Common myeloid progenitor, CD34-positive (primary cell): ENCODE measurements at regions of chr14 and their contacts with region 1.

Region 1: DNA sequence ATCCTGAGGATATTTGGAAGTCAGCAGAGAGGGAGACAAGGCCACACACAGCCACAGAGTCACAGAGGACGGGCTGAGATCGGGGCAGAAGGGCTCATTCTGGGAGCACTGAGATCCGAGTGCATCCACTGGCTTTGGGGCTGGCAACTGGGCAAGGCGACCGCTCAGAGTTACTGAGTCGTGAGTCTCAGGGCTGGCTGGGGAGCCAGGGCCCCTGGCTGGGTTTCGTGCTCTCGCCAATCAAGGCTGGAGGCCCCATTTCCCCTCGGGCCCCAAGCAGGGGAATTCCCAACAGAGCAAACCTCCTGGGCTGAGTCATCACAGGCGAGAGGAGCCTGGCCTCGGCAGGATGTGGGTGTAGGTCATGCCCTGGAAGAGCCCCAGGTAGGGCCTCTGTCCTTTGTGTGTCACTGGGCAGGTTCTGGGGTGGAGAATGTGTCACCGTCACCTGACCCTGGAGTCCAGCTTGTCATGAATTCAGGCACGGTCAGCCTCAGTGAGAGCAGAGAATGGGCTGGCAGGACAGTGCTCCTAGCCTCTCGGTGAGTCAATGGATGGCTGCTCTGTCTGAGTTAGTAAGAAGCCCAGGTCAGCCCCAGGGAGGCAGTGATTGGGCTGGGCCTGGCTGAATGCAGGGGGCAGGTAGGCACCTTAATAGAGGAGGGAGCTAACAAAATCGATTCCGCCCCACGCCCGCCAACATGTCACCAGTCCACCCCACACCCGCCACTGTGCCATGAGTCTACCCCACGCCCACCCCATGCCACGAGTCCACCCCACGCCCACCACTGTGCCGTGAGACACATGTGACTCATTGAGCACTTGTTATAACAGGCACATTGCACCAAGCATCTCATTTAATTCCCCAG is 16.9 kb downstream of the ASB2 start:
- DNase-seq: peak; percentile 91 to 98 (median 98)
- H3K4me3 ChIP-seq: peak overlapping the region in 2 of 7 experiments; percentile 50 to 56
- H3K27ac ChIP-seq: peak overlapping the region in 1 of 2 experiments; percentile 77
- H3K4me1 ChIP-seq: peaks cover 10 to 81% (median 74%) of the 10 kb centered on the region in 4 experiments
- H3K27me3 ChIP-seq: no peaks in the 10 kb centered on the region

Region 2: GRCh38 chr14:93683226-93683625 is 276.2 kb before region 1 on chr14:
- CTCF ChIA-PET with region 1: no interaction called
- POLR2A ChIA-PET with region 1: no interaction called
- DNase-seq: peak in 2 of 3 donors; percentile 7 to 8
- H3K4me3 ChIP-seq: no peak overlapping the region
- H3K27ac ChIP-seq: no peak overlapping the region
- H3K4me1 ChIP-seq: no peaks in the 10 kb centered on the region
- H3K27me3 ChIP-seq: peaks cover 0 to 28% (median 7%) of the 10 kb centered on the region in 5 experiments

Region 3: DNA sequence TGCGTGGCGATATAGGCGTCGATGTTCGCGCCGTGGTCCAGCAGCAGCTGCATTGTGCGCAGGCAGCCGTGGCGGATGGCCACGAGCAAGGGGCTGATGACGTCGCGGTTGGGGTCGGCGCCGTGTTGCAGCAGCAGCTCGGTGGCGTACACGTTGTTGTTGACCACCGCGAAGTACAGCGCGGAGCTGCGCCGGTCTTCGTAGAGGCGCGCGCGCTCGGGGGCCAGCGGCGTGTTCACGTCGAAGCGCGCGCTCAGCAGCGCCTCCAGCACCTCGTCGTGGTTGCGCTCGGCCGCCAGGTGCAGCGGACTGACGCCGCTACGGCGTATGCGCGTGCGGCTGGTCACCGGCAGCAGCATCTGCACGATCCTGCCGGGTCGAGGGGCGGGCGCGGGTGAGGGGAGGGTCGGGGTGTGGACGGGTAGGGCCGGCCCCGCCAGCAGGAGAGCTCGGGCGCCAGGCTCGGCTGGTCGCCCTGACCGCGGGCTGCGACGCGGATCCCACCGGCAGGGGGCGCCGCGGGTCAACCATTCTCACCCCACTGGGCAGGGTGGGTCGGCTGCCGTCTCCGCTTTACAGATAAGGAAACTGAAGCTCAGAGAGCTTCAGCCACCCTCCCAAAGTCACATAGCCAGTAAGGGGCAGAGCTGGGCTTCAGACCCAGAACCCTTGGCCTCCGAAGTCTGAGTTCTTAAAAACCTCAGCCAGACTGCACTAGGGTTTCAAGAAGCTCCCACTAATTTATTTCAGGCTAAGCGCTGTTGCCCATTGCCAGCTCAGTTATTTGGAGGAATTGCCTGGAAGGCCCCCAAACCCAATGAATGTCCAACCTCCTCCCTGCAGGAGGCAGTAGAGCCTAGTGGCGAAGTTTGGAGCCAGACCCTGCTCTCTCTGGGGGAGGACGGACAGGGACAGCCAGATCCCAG is 19.9 kb before region 1 on chr14:
- CTCF ChIA-PET with region 1: interaction called, 632 read pairs
- POLR2A ChIA-PET with region 1: no interaction called
- DNase-seq: peak; percentile 81 to 87 (median 84)
- H3K4me3 ChIP-seq: peak overlapping the region in 6 of 7 experiments; percentile 23 to 73 (median 42)
- H3K27ac ChIP-seq: no peak overlapping the region
- H3K4me1 ChIP-seq: peaks cover 0 to 9% (median 7%) of the 10 kb centered on the region in 4 experiments
- H3K27me3 ChIP-seq: peaks cover 0 to 17% (median 7%) of the 10 kb centered on the region in 5 experiments

Region 4: DNA sequence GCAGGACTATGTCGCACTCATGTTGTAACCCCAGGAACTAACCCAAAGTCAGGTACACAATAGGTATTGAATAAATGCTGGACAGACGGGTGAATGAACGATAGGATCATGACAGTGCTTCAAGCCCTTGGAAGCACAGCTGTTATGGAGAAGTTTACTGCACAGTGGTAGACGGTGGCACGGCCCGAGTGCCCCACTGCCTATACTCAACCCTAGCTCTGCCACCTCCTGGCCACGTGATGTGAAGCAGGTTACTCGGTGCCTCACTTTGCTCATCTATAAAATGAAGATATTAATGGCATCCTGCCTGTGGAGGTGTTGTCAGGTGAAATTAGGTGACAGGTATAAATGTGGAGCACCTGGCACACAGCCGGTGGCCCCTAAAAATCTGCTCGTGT is 11.1 kb after region 1 on chr14:
- CTCF ChIA-PET with region 1: interaction called, 26 read pairs
- POLR2A ChIA-PET with region 1: interaction called, 5 read pairs
- DNase-seq: peak; percentile 48 to 72 (median 71)
- H3K4me3 ChIP-seq: peak overlapping the region; percentile 44 to 86 (median 67)
- H3K27ac ChIP-seq: peak overlapping the region in 1 of 2 experiments; percentile 27
- H3K4me1 ChIP-seq: peaks cover 5 to 43% (median 34%) of the 10 kb centered on the region in 4 experiments
- H3K27me3 ChIP-seq: peaks cover 0 to 2% (median 0%) of the 10 kb centered on the region in 5 experiments